Activated naive CD4-positive, alpha-beta T cell treated with anti-CD3 and anti-CD28 coated beads, Interleukin-2, amount 10 ng/mL, durations not matched to agents 7 days and 5 days (primary cell): ENCODE measurements at regions of chr18 and their contacts with region 1.

Region 1: DNA sequence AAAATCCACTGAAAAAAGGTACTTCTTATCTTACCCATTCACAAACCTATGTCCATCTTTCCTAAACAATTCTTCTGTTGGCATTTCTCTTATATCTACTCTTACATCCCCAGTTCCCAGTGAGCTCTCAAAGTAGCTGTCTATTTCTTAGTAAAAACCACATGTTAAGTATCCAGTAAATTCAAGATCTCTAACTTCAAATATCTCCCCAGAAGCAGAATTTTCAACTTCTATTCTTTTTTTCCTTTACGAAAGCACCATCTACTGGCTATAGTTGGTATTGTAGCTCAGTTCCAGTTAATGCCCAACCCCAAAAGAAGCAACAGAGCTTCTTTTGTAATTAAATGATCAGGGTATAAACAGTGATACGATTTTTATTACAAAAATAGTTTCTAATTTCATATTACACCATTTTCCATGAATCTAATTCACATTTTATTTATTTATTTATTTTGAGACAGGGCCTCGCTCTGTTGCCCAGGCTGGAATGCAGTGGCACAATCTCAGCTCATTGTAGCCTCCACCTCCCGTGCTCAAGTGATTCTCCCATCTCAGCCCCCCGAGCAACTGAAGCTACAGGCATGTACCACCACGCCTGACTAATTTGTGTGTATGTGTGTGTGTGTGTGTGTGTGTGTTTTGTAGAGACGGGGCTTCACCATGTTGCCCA is 28.5 kb downstream of the HRH4 start:
- DNase-seq: no peak
- H3K4me3 Mint-ChIP-seq: no peak overlapping the region
- H3K27ac Mint-ChIP-seq: no peak overlapping the region
- H3K4me1 Mint-ChIP-seq: peaks cover 5% of the 10 kb centered on the region
- H3K27me3 Mint-ChIP-seq: peaks cover 33% of the 10 kb centered on the region

Region 2: GRCh38 chr18:24189007-24189528 is 299.9 kb before region 1 on chr18:
- CTCF ChIA-PET with region 1: no interaction called
- DNase-seq: no peak
- H3K4me3 Mint-ChIP-seq: no peak overlapping the region
- H3K27ac Mint-ChIP-seq: no peak overlapping the region
- H3K4me1 Mint-ChIP-seq: no peaks in the 10 kb centered on the region
- H3K27me3 Mint-ChIP-seq: peaks cover 7% of the 10 kb centered on the region

Region 3: DNA sequence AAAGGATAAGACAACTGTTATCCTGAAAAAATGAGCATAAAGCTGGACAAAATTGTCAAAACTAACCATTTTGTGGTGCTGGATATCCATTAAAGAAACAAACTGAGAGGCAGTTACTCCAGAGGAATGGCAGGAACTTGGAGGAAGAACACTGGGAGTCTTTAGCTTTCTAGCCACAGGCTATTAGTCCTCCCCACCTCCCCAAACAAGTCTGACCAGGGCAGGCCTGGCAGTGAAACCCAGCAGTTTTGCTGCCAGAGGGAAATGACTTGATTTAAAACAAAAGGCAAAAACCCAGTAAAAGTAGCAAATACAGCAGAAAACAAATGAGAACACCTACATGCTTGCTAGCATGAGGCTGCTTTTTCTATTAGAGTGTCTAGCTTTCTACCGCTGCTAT is 126.2 kb before region 1 on chr18:
- CTCF ChIA-PET with region 1: interaction called, 186 read pairs
- DNase-seq: no peak
- H3K4me3 Mint-ChIP-seq: no peak overlapping the region
- H3K27ac Mint-ChIP-seq: no peak overlapping the region
- H3K4me1 Mint-ChIP-seq: no peaks in the 10 kb centered on the region
- H3K27me3 Mint-ChIP-seq: no peaks in the 10 kb centered on the region

Region 4: GRCh38 chr18:24428708-24429107 is 60.3 kb before region 1 on chr18:
- CTCF ChIA-PET with region 1: interaction called, 10 read pairs
- DNase-seq: no peak
- H3K4me3 Mint-ChIP-seq: no peak overlapping the region
- H3K27ac Mint-ChIP-seq: no peak overlapping the region
- H3K4me1 Mint-ChIP-seq: peaks cover 25% of the 10 kb centered on the region
- H3K27me3 Mint-ChIP-seq: peaks cover 13% of the 10 kb centered on the region

Region 5: GRCh38 chr18:24502644-24503523 is 13.9 kb after region 1 on chr18:
- CTCF ChIA-PET with region 1: interaction called, 13 read pairs
- DNase-seq: no peak
- H3K4me3 Mint-ChIP-seq: no peak overlapping the region
- H3K27ac Mint-ChIP-seq: no peak overlapping the region
- H3K4me1 Mint-ChIP-seq: no peaks in the 10 kb centered on the region
- H3K27me3 Mint-ChIP-seq: peaks cover 15% of the 10 kb centered on the region